Transverse colon (tissue), 4 donors: ENCODE measurements at regions of chr1 and their contacts with region 1.

Region 1: DNA sequence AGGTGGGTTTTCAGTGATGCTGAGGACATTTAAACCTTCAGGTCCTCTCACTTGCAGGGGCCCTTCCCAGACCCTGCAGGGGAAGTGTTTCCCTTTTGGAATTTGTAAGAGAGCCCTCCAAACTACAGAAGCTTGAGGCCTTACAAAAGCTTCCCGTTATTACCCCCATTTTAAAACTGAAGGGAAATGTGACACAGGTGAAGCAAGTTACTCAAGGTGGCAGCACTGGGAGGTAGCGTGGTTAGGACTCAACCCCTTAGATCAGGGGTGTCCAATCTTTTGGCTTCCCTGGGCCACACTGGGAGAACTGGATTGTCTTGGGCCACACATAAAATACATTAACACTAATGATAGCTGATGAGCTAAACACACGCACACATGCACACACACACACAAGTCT is 15.9 kb upstream of the ZC3H12A start:
- DNase-seq: no peak
- H3K4me3 ChIP-seq: no peak overlapping the region
- H3K27ac ChIP-seq: no peak overlapping the region
- H3K4me1 ChIP-seq: peaks cover 0 to 9% (median 0%) of the 10 kb centered on the region in 4 donors
- H3K27me3 ChIP-seq: no peaks in the 10 kb centered on the region
- CTCF ChIP-seq: no peak
- EP300 ChIP-seq: no peak
- POLR2A ChIP-seq: no peak

Region 2: DNA sequence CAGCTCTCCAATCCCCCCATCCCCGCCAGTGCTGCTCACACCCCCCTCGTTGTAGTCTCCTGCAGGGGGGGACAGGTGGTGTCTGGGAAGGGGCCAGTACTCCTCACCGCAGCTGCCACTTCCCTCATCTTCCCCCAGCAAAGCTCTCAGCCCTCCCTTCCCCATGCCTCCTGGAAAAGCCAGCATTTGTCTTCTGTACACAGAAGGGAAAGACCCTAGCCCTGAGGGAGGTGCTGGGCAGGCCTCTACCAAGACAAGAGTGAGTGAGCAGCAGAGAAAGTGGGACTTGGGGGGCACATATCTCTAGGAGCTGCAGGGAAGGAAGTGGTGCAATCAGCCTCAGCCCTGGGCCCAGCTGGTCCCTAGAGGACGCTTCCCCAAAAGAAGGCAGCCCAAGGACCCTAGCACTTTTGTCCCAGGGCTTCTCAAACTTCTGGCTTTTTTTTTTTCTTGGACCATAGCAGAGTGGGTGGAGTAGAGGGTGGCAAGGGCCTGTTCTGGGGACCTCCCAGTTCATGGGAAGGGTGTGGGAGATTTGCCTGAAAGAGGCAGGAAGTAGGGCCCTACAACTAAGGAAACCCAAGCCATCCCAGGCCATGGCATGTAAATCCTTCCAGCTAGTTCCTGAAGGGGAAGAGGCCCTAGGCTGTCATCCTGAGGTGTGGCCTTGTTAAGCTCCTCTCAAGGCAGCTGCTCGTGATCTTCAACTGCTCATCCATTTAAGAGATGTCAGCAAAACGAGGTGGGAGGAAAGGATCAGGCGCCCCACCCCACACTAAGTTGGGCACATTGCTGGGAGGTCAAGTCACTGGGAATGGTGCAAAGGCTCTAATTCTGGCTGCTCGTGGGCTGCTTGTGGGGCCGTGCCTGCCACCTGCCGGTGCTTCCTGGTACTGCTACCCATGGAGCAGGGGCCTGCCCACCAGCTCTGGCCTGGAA is 28.4 kb after region 1 on chr1:
- in situ Hi-C with region 1: loop called in 1 of 4 experiments (anchors 5 kb)
- intact Hi-C with region 1: loop called (anchors 1 kb)
- DNase-seq: peak; percentile 81
- H3K4me3 ChIP-seq: no peak overlapping the region
- H3K27ac ChIP-seq: peak overlapping the region; percentile 69 to 77 (median 74)
- H3K4me1 ChIP-seq: peaks cover 21 to 34% (median 29%) of the 10 kb centered on the region in 4 donors
- H3K27me3 ChIP-seq: no peaks in the 10 kb centered on the region
- CTCF ChIP-seq: peak; percentile 99
- EP300 ChIP-seq: no peak
- POLR2A ChIP-seq: no peak

Region 3: GRCh38 chr1:37493336-37494098 is 35.0 kb after region 1 on chr1:
- in situ Hi-C with region 1: loop called in 1 of 4 experiments (anchors 5 kb)
- intact Hi-C with region 1: no loop called
- DNase-seq: no peak
- H3K4me3 ChIP-seq: no peak overlapping the region
- H3K27ac ChIP-seq: no peak overlapping the region
- H3K4me1 ChIP-seq: peaks cover 0 to 12% (median 9%) of the 10 kb centered on the region in 4 donors
- H3K27me3 ChIP-seq: no peaks in the 10 kb centered on the region
- CTCF ChIP-seq: no peak
- EP300 ChIP-seq: no peak
- POLR2A ChIP-seq: no peak